ENCODE measurements at regions of chr1 and their contacts with region 1.

Region 1: GRCh38 chr1:184754476-184755225 is at the start of gene EDEM3:
- DNase-seq: peak; percentile 97 to 100 (median 98)
- ATAC-seq: peak; percentile 93
- H3K4me3 ChIP-seq: peak within 1 kb of the TSS; percentile 83
- H3K27ac ChIP-seq: peak within 1 kb of the TSS; percentile 80
- H3K4me1 ChIP-seq: peaks cover 4 to 11% of the 10 kb centered on the region in 2 experiments; a peak in 3 of 5 replicates
- H3K27me3 ChIP-seq: no peaks in the 10 kb centered on the region
- CTCF ChIP-seq: peak in 1 of 3 experiments; percentile 0; a peak in 1 of 6 replicates
- EP300 ChIP-seq: no peak
- POLR2A ChIP-seq: peak; percentile 92
- RAD21 ChIP-seq: peak in 1 of 2 experiments; percentile 18; a peak in 1 of 4 replicates
- polyA plus RNA-seq, gene EDEM3: 15.8 to 18.5 TPM

Region 2: DNA sequence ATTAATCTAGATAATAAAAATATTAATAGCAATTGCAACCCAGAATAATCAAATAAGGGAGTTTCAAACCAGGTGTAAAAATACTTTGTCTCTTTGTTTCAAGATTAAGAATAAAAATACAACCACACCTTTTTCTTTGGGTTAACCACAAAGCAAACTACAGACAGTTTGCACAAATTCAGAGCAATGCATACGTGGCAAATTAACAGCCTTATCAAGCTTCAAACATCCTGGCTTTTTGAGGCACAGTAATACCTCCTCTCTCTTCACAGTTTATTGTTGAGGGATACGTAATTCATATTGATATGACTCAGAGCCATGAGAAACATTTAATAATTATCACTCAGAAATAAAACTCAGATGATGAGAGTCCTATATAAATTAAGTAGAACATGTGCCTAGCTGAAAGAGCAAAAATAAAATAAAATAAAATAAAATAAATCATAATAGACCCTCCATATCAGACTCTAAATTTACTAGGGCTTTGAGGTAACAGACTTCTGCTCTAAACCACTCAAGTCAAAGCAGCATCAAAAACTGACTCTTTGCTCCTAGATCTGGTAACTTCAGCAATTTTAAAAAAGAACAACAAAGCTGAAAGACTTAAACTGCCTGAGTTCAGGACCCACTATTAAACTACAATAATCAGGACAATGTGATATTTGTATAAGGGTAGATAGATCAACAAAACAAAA is 11.4 kb before region 1 on chr1:
- CTCF ChIA-PET with region 1: no interaction called
- POLR2A ChIA-PET with region 1: interaction called, 12 read pairs
- in situ Hi-C with region 1: no loop called
- intact Hi-C with region 1: no loop called
- DNase-seq: peak in 2 of 4 experiments; percentile 22 to 31
- ATAC-seq: peak; percentile 29; the same call in 2 of the 3 replicates
- H3K4me3 ChIP-seq: no peak overlapping the region
- H3K27ac ChIP-seq: peak overlapping the region; percentile 18; the same call in 1 of the 3 replicates
- H3K4me1 ChIP-seq: peaks cover 0 to 19% of the 10 kb centered on the region in 2 experiments; a peak in 3 of 5 replicates
- H3K27me3 ChIP-seq: no peaks in the 10 kb centered on the region
- CTCF ChIP-seq: no peak
- EP300 ChIP-seq: no peak
- POLR2A ChIP-seq: no peak
- RAD21 ChIP-seq: no peak

Region 3: DNA sequence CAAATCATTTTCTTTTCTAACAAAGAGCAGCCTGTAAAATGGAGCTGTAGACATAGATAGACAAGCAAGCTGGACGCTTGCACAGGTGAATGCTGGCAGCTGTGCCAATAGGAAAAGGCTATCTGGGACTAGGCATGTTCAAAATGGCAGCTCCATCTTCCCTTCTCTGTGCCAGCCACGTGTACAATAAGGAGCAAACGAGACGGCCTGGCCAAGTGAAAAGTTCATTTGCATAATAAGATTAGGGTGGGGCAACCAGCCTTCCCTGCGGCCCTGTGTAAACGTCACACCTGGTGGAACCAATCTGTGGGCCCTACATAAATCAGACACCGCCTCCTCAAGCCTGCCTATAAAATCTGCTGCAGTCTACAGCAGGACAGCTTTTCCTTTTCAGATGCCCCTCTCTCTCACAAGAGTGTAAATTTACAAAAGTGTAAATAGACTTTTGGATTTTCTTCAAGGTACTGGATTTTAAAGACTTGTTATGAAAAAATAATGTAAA is 16.6 kb after region 1 on chr1:
- CTCF ChIA-PET with region 1: no interaction called
- POLR2A ChIA-PET with region 1: interaction called, 36 read pairs
- in situ Hi-C with region 1: no loop called
- intact Hi-C with region 1: loop called (anchors 2 kb)
- DNase-seq: peak; percentile 27 to 96 (median 58)
- ATAC-seq: peak; percentile 94
- H3K4me3 ChIP-seq: no peak overlapping the region
- H3K27ac ChIP-seq: peak overlapping the region; percentile 56
- H3K4me1 ChIP-seq: peaks cover 14 to 46% of the 10 kb centered on the region in 2 experiments
- H3K27me3 ChIP-seq: no peaks in the 10 kb centered on the region
- CTCF ChIP-seq: no peak
- EP300 ChIP-seq: no peak
- POLR2A ChIP-seq: peak; percentile 83
- RAD21 ChIP-seq: no peak

Region 4: DNA sequence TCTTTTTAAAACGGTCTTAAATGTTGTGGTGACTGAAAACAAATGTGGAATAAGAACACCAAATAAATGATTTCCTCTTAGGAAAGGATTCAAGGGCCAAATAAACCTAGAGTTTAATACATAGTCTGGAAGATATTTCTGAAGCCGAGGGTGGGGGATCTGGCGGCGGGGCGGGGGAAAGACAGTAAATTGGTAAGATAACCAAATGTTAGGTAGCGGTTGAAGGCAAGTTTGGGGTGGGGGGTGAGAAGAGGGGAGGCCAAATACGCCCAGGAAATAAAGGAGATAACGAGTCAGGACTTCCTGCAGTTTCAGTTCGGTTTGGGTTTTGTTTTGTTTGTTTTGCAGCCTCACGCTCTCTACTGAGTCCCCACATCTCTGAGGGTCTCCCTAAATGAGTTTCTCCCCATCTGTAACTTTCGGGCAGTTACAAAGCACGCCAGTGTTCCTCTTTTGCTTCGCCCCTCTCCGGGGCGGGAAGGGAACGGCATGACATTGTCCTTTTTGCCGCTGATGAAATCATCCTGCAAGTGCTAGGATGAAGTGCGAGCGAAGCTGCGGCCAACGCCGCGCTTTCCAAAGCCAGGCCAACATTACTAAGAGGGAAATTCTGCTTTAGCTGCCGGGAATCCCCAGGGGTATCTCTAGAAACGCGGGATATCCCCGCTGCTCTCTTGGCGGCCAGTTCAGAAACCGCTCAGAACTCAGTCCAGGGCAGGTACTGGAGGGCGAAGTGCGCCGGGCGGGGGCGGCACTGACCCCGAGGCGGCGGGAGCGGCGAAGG is 218.8 kb after region 1 on chr1:
- CTCF ChIA-PET with region 1: no interaction called
- POLR2A ChIA-PET with region 1: interaction called, 9 read pairs
- in situ Hi-C with region 1: no loop called
- intact Hi-C with region 1: loop called (anchors 2 kb)
- DNase-seq: peak in 3 of 4 experiments; percentile 28 to 79 (median 66)
- ATAC-seq: peak; percentile 83
- H3K4me3 ChIP-seq: peak overlapping the region; percentile 75
- H3K27ac ChIP-seq: peak overlapping the region; percentile 92
- H3K4me1 ChIP-seq: peaks cover 13 to 18% of the 10 kb centered on the region in 2 experiments; a peak in 4 of 5 replicates
- H3K27me3 ChIP-seq: no peaks in the 10 kb centered on the region
- CTCF ChIP-seq: no peak
- EP300 ChIP-seq: peak; percentile 90
- POLR2A ChIP-seq: peak; percentile 77
- RAD21 ChIP-seq: no peak; a peak in 1 of 4 replicates

Region 5: GRCh38 chr1:184982002-184982954 is 227.6 kb after region 1 on chr1:
- CTCF ChIA-PET with region 1: no interaction called
- POLR2A ChIA-PET with region 1: interaction called, 5 read pairs
- in situ Hi-C with region 1: no loop called
- intact Hi-C with region 1: loop called (anchors 2 kb)
- DNase-seq: peak; percentile 63 to 88 (median 74)
- ATAC-seq: peak; percentile 100
- H3K4me3 ChIP-seq: no peak overlapping the region
- H3K27ac ChIP-seq: no peak overlapping the region
- H3K4me1 ChIP-seq: peaks cover 0 to 2% of the 10 kb centered on the region in 2 experiments; a peak in 2 of 5 replicates
- H3K27me3 ChIP-seq: peaks cover 0 to 2% of the 10 kb centered on the region in 2 experiments; a peak in 1 of 5 replicates
- CTCF ChIP-seq: peak; percentile 91 to 98 (median 98)
- EP300 ChIP-seq: peak; percentile 60; the same call in 1 of the 2 replicates
- POLR2A ChIP-seq: no peak
- RAD21 ChIP-seq: peak; percentile 98 to 99

Region 6: DNA sequence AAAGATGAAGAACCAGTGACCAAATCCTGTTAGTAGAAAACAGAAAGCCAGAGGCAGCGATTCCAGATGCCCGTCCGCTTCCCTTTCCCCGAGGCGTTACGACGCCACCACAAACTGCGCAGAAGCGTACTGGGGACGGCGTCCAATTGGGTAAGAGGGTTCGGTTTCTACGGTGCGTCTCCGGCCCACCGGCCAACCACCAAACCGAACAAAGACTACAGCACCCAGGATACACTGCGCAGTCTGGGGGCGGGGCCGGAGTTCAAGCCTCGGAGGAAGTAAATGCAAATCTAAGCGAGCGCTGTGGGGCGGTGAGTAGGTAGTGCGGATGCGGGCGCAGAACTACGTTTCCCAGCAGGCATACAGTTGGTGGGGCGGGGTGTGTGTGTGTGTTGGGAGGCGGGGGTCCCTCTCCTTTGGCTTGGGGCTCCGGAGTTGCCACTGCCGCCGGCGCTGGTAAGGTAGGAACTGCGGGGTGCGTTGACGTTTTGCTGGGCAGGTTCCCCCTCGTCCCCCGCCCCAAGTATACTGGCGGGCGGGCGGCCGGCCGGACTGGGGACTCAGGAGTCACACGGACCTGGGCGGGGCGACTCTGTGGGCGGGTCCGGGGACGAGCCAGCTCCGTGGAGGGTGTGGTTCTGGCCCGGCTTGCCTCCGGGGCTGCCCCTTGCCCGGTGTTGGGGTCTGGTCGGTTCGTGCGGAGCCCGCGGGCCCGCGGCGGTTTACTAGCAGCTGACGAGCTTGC is 402.4 kb after region 1 on chr1 and contains the starts of genes SWT1 and TRMT1L:
- CTCF ChIA-PET with region 1: no interaction called
- POLR2A ChIA-PET with region 1: interaction called, 5 read pairs
- in situ Hi-C with region 1: no loop called
- intact Hi-C with region 1: loop called (anchors 5 kb)
- DNase-seq: peak; percentile 91 to 100 (median 93)
- ATAC-seq: peak; percentile 91
- H3K4me3 ChIP-seq: peak within 1 kb of the TSS; percentile 87
- H3K27ac ChIP-seq: peak within 1 kb of the TSS; percentile 88
- H3K4me1 ChIP-seq: peaks cover 10 to 23% of the 10 kb centered on the region in 2 experiments; a peak in 3 of 5 replicates
- H3K27me3 ChIP-seq: no peaks in the 10 kb centered on the region
- CTCF ChIP-seq: no peak
- EP300 ChIP-seq: no peak
- POLR2A ChIP-seq: peak; percentile 96
- RAD21 ChIP-seq: no peak
- polyA plus RNA-seq, gene SWT1: 1.5 to 2.3 TPM
- polyA plus RNA-seq, gene TRMT1L: 6.4 to 7.9 TPM

Measured in K562 (cell line).